Naive thymus-derived CD4-positive, alpha-beta T cell (primary cell): ENCODE measurements at regions of chr11 and their contacts with region 1.

Region 1: DNA sequence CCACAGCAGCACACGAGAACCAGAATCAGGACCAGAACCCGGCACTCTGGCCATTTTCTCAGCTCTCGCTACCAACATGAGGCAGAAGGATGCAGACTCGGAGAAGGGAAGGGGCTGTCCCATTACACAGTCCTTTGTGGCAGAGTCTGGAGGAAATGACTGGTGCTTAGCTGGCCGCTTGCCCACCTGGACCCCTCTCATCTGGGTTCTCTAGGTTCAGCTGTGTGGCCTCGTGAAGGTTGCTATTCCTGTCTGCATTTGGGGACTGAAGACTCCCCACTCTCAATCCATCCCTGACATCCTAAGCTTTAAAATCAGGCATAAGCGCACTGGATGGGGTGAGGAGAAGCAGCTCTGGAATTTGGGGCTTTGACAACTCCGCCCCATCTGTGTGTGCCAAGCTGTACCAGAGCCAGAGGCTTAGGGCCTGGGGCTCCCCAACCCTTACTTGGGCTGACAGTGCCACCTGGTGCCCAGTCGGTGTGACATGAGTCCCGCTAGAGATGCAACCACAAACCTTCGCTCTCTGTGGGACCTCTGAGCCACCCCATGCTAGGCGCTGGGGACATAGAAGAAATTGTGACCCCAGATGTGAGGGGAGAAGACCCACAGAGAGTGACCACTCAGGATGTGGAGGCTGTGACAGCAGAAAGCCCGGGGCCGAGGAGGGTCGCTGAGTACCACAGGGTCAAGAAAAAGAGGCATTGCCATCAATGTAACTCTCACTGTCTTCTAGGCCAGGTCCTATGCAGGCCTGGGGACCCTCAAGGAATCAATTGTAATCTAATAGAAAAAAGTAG is 35.9 kb upstream of the FCHSD2 start:
- DNase-seq: peak; percentile 56 to 80 (median 76)
- ATAC-seq: peak; percentile 98
- H3K4me3 ChIP-seq: no peak overlapping the region
- H3K4me3 Mint-ChIP-seq: no peak overlapping the region
- H3K27ac ChIP-seq: no peak overlapping the region
- H3K27ac Mint-ChIP-seq: peak overlapping the region in 2 of 9 donors; percentile 14 to 42
- H3K4me1 ChIP-seq: no peaks in the 10 kb centered on the region
- H3K4me1 Mint-ChIP-seq: peaks cover 4 to 26% (median 9%) of the 10 kb centered on the region in 7 donors
- H3K27me3 ChIP-seq: peaks cover 0 to 2% of the 10 kb centered on the region in 2 donors
- H3K27me3 Mint-ChIP-seq: peaks cover 0 to 27% (median 0%) of the 10 kb centered on the region in 5 donors

Region 2: GRCh38 chr11:72080256-72080974 is 1097.6 kb before region 1 on chr11 and contains the starts of genes LRRC51 and NUMA1:
- CTCF ChIA-PET with region 1: no interaction called
- POLR2A ChIA-PET with region 1: no interaction called
- intact Hi-C with region 1: no loop called
- DNase-seq: peak; percentile 88 to 100 (median 99)
- ATAC-seq: peak; percentile 94
- H3K4me3 ChIP-seq: peak within 1 kb of the TSS; percentile 88
- H3K4me3 Mint-ChIP-seq: peak within 1 kb of the TSS; percentile 80 to 95 (median 92)
- H3K27ac ChIP-seq: peak within 1 kb of the TSS; percentile 80
- H3K27ac Mint-ChIP-seq: peak within 1 kb of the TSS; percentile 93 to 100 (median 97)
- H3K4me1 ChIP-seq: peaks cover 10% of the 10 kb centered on the region in 2 donors
- H3K4me1 Mint-ChIP-seq: peaks cover 30 to 62% (median 58%) of the 10 kb centered on the region in 7 donors
- H3K27me3 ChIP-seq: no peaks in the 10 kb centered on the region
- H3K27me3 Mint-ChIP-seq: no peaks in the 10 kb centered on the region
- total RNA-seq, gene LRRC51: 1.2 to 7.8 (median 4.6) TPM
- total RNA-seq, gene NUMA1: 216 to 453 (median 266) TPM

Region 3: DNA sequence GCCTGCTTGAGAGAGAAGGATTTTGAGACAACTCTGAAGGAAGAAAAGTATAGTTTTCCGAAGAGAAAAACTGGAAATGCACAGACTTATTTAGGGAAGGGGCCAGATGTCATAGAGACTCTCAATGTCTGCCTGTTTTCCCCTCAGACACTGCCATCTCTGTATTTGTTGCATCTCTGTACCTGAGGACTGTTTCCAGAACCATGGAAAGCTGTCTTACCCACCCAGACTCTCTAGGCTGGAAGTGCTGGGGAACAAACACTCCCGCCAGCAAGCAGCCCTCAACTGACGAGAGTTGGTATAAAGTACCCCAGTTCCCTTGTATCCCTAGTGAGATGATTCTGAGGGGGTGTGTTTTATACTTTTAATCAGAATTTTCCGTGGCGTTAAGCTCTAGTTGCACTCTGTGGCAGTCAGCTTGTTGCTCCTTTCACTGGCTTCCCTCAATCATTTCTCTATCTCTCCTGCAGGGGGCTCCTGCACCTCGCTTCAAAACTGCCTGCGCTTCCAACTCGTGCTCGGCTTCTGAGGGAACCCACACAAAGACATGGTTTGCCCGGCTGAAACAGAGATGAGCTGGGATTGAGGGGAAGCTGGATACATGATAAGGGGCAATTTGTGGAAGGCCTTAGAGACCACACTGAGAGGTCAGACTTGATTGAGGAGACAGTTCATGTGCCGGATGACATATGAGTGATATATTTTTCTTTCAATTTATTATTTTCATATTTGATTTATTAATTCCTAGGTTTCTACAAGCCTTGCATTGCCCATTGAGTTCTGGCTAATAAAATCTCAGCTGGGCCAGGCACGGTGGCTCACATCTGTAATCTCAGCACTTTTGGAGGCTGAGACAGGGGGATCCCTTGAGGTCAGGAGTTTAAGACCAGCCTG is 706.7 kb before region 1 on chr11:
- CTCF ChIA-PET with region 1: no interaction called
- POLR2A ChIA-PET with region 1: no interaction called
- intact Hi-C with region 1: loop called in 1 of 2 experiments (anchors 1 kb)
- DNase-seq: peak; percentile 23 to 72 (median 62)
- ATAC-seq: peak; percentile 84
- H3K4me3 ChIP-seq: no peak overlapping the region
- H3K4me3 Mint-ChIP-seq: peak overlapping the region in 6 of 10 donors; percentile 34 to 63 (median 42)
- H3K27ac ChIP-seq: no peak overlapping the region
- H3K27ac Mint-ChIP-seq: peak overlapping the region in 1 of 9 donors; percentile 2
- H3K4me1 ChIP-seq: no peaks in the 10 kb centered on the region
- H3K4me1 Mint-ChIP-seq: peaks cover 0 to 6% (median 4%) of the 10 kb centered on the region in 7 donors
- H3K27me3 ChIP-seq: no peaks in the 10 kb centered on the region
- H3K27me3 Mint-ChIP-seq: peaks cover 23 to 51% (median 34%) of the 10 kb centered on the region in 5 donors

Region 4: DNA sequence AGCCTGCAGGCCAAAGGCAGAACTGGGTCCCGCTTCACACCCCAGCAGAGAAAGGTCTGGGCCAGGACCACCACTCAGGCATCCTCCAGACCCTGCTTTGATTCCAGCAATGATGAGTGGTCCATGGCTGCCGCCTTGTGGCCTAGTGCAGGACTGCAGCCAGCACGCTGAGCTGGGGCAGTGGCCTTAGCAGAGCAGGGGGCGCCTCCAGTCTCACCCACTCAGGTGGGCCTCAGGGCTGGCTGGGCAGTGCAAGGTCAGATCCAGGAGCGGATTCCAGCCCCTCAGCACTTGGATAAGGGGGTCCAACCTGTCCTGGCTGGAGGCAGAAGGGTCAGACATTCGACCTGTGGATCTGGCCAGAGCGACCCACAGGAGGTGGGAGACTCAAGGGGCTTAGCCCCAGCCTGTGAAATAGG is 494.2 kb before region 1 on chr11:
- CTCF ChIA-PET with region 1: interaction called, 6 read pairs
- POLR2A ChIA-PET with region 1: no interaction called
- intact Hi-C with region 1: loop called in 1 of 2 experiments (anchors 1 kb)
- DNase-seq: peak; percentile 36 to 75 (median 56)
- ATAC-seq: peak; percentile 77
- H3K4me3 ChIP-seq: no peak overlapping the region
- H3K4me3 Mint-ChIP-seq: no peak overlapping the region
- H3K27ac ChIP-seq: no peak overlapping the region
- H3K27ac Mint-ChIP-seq: peak overlapping the region in 3 of 9 donors; percentile 59 to 74 (median 61)
- H3K4me1 ChIP-seq: no peaks in the 10 kb centered on the region
- H3K4me1 Mint-ChIP-seq: peaks cover 7 to 46% (median 16%) of the 10 kb centered on the region in 7 donors
- H3K27me3 ChIP-seq: no peaks in the 10 kb centered on the region
- H3K27me3 Mint-ChIP-seq: peaks cover 0 to 11% (median 0%) of the 10 kb centered on the region in 5 donors

Region 5: GRCh38 chr11:72848846-72849466 is 329.0 kb before region 1 on chr11:
- CTCF ChIA-PET with region 1: interaction called, 7 read pairs
- POLR2A ChIA-PET with region 1: interaction called, 3 read pairs
- intact Hi-C with region 1: loop called (anchors 1 to 5 kb)
- DNase-seq: peak in 7 of 9 donors; percentile 28 to 61 (median 47)
- ATAC-seq: peak; percentile 81
- H3K4me3 ChIP-seq: no peak overlapping the region
- H3K4me3 Mint-ChIP-seq: no peak overlapping the region
- H3K27ac ChIP-seq: no peak overlapping the region
- H3K27ac Mint-ChIP-seq: peak overlapping the region in 3 of 9 donors; percentile 3 to 81 (median 4)
- H3K4me1 ChIP-seq: no peaks in the 10 kb centered on the region
- H3K4me1 Mint-ChIP-seq: peaks cover 4 to 28% (median 12%) of the 10 kb centered on the region in 7 donors
- H3K27me3 ChIP-seq: no peaks in the 10 kb centered on the region
- H3K27me3 Mint-ChIP-seq: no peaks in the 10 kb centered on the region

Region 6: GRCh38 chr11:73157053-73158010 is 20.6 kb before region 1 on chr11:
- CTCF ChIA-PET with region 1: interaction called, 11 read pairs
- POLR2A ChIA-PET with region 1: no interaction called
- intact Hi-C with region 1: no loop called
- DNase-seq: no peak
- ATAC-seq: peak; percentile 45
- H3K4me3 ChIP-seq: no peak overlapping the region
- H3K4me3 Mint-ChIP-seq: peak overlapping the region in 1 of 10 donors; percentile 38
- H3K27ac ChIP-seq: no peak overlapping the region
- H3K27ac Mint-ChIP-seq: peak overlapping the region in 3 of 9 donors; percentile 55 to 75 (median 67)
- H3K4me1 ChIP-seq: peaks cover 40 to 50% of the 10 kb centered on the region in 2 donors
- H3K4me1 Mint-ChIP-seq: peaks cover 43 to 56% (median 48%) of the 10 kb centered on the region in 7 donors
- H3K27me3 ChIP-seq: no peaks in the 10 kb centered on the region
- H3K27me3 Mint-ChIP-seq: no peaks in the 10 kb centered on the region